ENCODE measurements at regions of chr2 and their contacts with region 1.

Region 1: GRCh38 chr2:150487537-150488429 is at the start of gene RND3:
- DNase-seq: peak; percentile 58 to 76 (median 66)
- ATAC-seq: peak; percentile 92
- H3K4me3 ChIP-seq: no peak within 1 kb of the TSS
- H3K27ac ChIP-seq: no peak within 1 kb of the TSS
- H3K4me1 ChIP-seq: peaks cover 0 to 8% of the 10 kb centered on the region in 2 experiments; a peak in 1 of 5 replicates
- H3K27me3 ChIP-seq: 0 out of 5 replicates have a peak, but pooled peaks cover 0 to 6% of the 10 kb centered on the region in 2 experiments
- CTCF ChIP-seq: peak; percentile 55 to 74 (median 67)
- EP300 ChIP-seq: no peak
- POLR2A ChIP-seq: no peak
- RAD21 ChIP-seq: peak; percentile 79 to 83
- polyA plus RNA-seq, gene RND3: not detected

Region 2: DNA sequence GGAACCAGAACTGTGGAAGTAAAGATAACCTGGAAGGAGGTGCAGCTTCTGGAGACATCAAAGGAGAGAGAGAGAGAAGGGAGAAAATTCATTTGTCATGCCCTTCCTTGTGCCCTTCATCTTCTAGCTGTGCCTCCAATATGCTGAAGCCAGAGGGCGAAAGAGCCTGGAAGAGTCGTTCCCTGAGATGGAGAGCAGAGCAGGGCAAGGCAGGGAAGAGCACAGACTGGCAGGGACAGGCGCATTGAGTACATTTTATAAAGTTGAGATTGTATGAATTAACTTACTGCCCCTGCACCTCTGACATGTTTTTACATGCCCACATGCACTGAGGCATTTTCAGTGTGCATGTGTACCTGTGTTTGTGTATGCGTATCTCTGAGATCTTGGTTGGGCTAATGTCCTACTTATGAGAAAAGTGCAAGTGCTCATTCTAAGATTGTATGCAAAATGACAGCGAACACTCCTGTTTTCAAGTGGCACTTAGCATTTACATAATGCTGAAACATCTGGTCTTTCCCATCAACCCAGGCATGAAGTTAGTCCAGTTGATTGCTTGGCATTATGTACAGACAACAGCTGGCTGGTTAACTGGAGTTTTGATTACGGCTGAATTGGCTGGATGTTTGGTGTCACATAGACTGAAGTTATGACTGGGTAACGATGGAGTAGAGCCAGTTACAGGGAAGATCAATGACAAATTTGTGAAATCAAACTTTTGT is 876.5 kb before region 1 on chr2:
- CTCF ChIA-PET with region 1: no interaction called
- POLR2A ChIA-PET with region 1: no interaction called
- in situ Hi-C with region 1: loop called (anchors 25 kb)
- intact Hi-C with region 1: no loop called
- DNase-seq: no peak
- ATAC-seq: 0 out of 3 replicates have a peak, but pooled peaks have one; percentile 35
- H3K4me3 ChIP-seq: no peak overlapping the region
- H3K27ac ChIP-seq: no peak overlapping the region
- H3K4me1 ChIP-seq: no peaks in the 10 kb centered on the region
- H3K27me3 ChIP-seq: no peaks in the 10 kb centered on the region
- CTCF ChIP-seq: no peak
- EP300 ChIP-seq: no peak
- POLR2A ChIP-seq: no peak
- RAD21 ChIP-seq: no peak

Region 3: DNA sequence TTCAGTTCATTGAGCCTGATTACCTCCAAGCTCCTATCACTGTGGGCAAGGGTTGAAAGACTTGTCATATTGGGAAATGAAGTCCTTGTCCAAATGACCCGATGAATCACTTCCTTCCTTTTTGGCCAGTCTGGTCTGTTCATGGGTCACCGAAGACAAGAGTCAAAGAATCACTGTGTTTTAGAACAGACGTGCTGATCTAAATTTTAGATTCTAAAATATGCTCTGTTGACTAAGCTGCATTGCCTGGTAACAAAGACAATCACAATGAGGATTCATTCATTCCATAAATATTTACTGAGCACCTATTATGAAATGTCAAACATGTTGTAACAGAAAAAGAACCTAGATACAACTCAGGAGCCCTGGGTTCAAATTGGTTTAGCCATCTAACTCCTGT is 99.1 kb after region 1 on chr2:
- CTCF ChIA-PET with region 1: no interaction called
- POLR2A ChIA-PET with region 1: no interaction called
- in situ Hi-C with region 1: no loop called
- intact Hi-C with region 1: no loop called
- DNase-seq: no peak
- ATAC-seq: no peak
- H3K4me3 ChIP-seq: no peak overlapping the region
- H3K27ac ChIP-seq: no peak overlapping the region
- H3K4me1 ChIP-seq: no peaks in the 10 kb centered on the region
- H3K27me3 ChIP-seq: no peaks in the 10 kb centered on the region
- CTCF ChIP-seq: no peak
- EP300 ChIP-seq: no peak
- POLR2A ChIP-seq: no peak
- RAD21 ChIP-seq: no peak

Measured in K562 (cell line).